Common myeloid progenitor, CD34-positive (primary cell): ENCODE measurements at regions of chr17 and their contacts with region 1.

Region 1: DNA sequence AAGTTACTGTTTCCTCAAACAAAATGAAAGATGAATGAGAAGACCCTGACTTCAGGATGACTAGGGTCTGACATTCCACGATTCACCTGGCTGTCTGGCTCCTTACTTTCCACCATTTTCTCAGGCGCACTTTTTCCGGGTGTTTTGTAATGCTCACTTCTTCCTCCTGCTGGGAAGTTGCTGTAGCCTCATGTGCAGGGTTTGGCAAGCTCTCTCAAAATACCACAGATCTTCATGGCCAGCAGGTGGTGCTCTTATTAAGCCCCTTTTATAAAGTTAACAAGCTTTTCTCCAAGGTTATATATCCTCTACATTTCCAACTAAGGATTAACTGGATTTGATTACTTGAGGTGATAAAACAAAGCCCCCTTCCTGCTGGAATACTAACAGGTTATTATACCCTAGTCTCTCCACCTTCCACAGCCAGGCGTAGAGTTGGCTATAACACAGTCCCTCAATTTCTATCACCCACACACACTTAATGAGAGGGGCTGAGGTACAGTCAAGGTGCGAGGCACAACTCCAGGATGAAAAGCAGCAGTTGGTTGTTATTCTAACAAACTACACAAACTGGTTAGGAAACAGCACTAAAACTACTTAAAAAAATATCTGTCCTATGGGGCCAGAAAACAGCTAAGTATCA is 45.4 kb downstream of the STH start:
- DNase-seq: peak; percentile 86 to 87 (median 86)
- H3K4me3 ChIP-seq: no peak overlapping the region
- H3K27ac ChIP-seq: no peak overlapping the region
- H3K4me1 ChIP-seq: peaks cover 0 to 5% (median 0%) of the 10 kb centered on the region in 4 experiments
- H3K27me3 ChIP-seq: no peaks in the 10 kb centered on the region

Region 2: GRCh38 chr17:45994987-45995386 is 49.4 kb before region 1 on chr17:
- CTCF ChIA-PET with region 1: no interaction called
- POLR2A ChIA-PET with region 1: no interaction called
- DNase-seq: no peak
- H3K4me3 ChIP-seq: no peak overlapping the region
- H3K27ac ChIP-seq: no peak overlapping the region
- H3K4me1 ChIP-seq: no peaks in the 10 kb centered on the region
- H3K27me3 ChIP-seq: peaks cover 0 to 2% (median 0%) of the 10 kb centered on the region in 5 experiments

Region 3: DNA sequence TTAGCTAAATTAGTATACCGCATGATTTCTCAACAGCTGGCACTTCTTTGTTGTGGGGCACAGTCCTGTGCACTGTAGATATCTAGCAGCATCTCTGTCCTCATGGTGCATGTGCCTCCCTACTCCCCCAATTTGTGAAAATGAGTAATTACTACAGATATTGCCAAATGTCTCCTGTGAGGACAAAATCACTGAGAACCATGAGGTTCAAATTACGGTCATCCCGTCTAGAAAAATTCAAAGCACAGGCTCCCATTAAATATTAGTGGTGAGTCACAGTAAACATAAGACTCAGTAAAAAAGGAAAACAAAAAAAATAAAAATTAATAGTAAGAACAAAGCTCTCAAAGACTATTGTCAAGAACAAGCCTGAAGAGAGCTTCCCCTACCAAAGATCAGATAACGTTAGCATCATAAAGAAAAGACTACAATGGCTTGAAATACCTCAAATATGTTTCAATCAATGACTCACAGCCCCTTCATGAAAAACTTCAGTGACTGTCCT is 12.4 kb after region 1 on chr17:
- CTCF ChIA-PET with region 1: interaction called, 15 read pairs
- POLR2A ChIA-PET with region 1: no interaction called
- DNase-seq: no peak
- H3K4me3 ChIP-seq: no peak overlapping the region
- H3K27ac ChIP-seq: no peak overlapping the region
- H3K4me1 ChIP-seq: no peaks in the 10 kb centered on the region
- H3K27me3 ChIP-seq: no peaks in the 10 kb centered on the region

Region 4: GRCh38 chr17:46184696-46185095 is 140.3 kb after region 1 on chr17:
- CTCF ChIA-PET with region 1: interaction called, 19 read pairs
- POLR2A ChIA-PET with region 1: no interaction called
- DNase-seq: no peak
- H3K4me3 ChIP-seq: no peak overlapping the region
- H3K27ac ChIP-seq: no peak overlapping the region
- H3K4me1 ChIP-seq: peaks cover 0 to 51% (median 30%) of the 10 kb centered on the region in 4 experiments
- H3K27me3 ChIP-seq: no peaks in the 10 kb centered on the region